ENCODE measurements at regions of chr14 and their contacts with region 1.

Region 1: GRCh38 chr14:69818757-69819191 is 21.7 kb upstream of the SLC10A1 start:
- DNase-seq: peak; percentile 95
- ATAC-seq: peak; percentile 92
- H3K4me3 ChIP-seq: no peak overlapping the region
- H3K27ac ChIP-seq: no peak overlapping the region
- H3K4me1 ChIP-seq: no peaks in the 10 kb centered on the region
- H3K27me3 ChIP-seq: peaks cover 83% of the 10 kb centered on the region
- CTCF ChIP-seq: peak; percentile 97

Region 2: GRCh38 chr14:69586404-69586803 is 232.4 kb before region 1 on chr14:
- CTCF ChIA-PET with region 1: no interaction called
- POLR2A ChIA-PET with region 1: no interaction called
- intact Hi-C with region 1: loop called (anchors 5 kb)
- DNase-seq: no peak
- ATAC-seq: no peak
- H3K4me3 ChIP-seq: no peak overlapping the region
- H3K27ac ChIP-seq: no peak overlapping the region
- H3K4me1 ChIP-seq: no peaks in the 10 kb centered on the region
- H3K27me3 ChIP-seq: no peaks in the 10 kb centered on the region
- CTCF ChIP-seq: no peak

Region 3: GRCh38 chr14:69803753-69804152 is 15.0 kb before region 1 on chr14:
- CTCF ChIA-PET with region 1: no interaction called
- POLR2A ChIA-PET with region 1: no interaction called
- intact Hi-C with region 1: no loop called
- DNase-seq: peak; percentile 48
- ATAC-seq: peak; percentile 91
- H3K4me3 ChIP-seq: no peak overlapping the region
- H3K27ac ChIP-seq: no peak overlapping the region
- H3K4me1 ChIP-seq: no peaks in the 10 kb centered on the region
- H3K27me3 ChIP-seq: peaks cover 26% of the 10 kb centered on the region
- CTCF ChIP-seq: peak; percentile 60

Region 4: DNA sequence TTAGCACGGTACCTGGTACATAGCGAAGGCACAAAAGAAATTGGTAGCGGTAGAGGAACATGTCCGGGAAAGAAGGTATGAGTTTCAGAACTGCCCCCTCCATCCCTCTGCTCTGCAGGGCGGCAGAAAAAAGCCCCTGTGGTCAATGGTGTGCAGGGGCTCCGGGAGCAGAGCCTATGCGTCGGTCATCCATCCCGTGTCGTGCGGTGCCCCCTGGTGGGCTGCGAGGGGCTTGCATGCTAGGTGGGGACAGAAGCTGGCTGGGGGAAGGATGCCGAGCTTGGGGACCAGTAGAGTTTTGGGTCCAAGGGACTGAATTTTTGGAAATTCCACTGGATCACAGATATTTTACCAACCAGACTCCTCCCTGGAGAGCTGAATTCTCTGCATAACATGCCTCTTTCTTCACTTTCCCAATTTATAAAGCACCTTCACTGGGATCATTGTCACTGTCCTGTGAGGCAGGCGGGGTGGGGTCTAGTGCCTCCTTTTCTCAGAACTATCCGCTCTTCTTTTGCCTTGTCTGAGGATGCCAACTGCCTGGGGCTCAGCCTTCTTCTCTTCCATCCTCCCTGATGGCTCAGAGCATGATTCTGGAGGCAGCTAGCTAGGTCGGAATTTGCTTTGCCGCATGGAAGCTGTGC is 209.1 kb after region 1 on chr14:
- CTCF ChIA-PET with region 1: interaction called, 32 read pairs
- POLR2A ChIA-PET with region 1: no interaction called
- intact Hi-C with region 1: loop called (anchors 1 kb)
- DNase-seq: peak; percentile 72
- ATAC-seq: peak; percentile 86
- H3K4me3 ChIP-seq: no peak overlapping the region
- H3K27ac ChIP-seq: no peak overlapping the region
- H3K4me1 ChIP-seq: peaks cover 4% of the 10 kb centered on the region; the same call in 1 of the 2 replicates
- H3K27me3 ChIP-seq: peaks cover 67% of the 10 kb centered on the region
- CTCF ChIP-seq: peak; percentile 93

Region 5: DNA sequence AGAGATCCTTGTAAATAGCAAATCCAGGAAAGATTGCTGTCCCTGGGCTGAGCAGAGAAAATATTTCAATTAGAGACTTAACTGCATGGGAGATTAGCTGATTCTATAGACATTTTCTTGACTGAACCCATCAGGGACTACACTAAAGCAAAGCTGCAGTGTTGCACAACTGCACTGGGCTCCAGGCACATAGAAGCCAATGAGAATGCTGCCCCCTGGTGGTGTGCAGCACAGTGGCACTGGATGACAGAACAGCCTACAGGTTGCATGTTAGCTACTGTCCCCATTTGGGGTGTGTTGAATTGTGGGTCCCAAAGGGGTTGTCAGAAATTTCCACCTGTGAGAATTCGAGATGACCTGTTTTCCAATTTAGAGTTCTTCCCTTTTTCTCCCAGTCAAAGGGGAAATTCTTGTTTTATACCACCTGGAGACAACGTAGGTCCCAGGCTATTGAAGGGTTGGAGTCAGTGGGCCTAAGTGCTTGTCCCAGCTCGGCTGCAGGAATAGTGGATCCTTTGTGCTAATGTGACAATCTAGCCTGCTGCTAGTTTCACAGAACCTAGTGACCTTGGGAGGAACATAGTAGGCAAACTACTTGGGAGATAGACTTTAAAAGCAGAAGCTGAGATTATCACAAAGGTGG is 255.3 kb after region 1 on chr14:
- CTCF ChIA-PET with region 1: interaction called, 8 read pairs
- POLR2A ChIA-PET with region 1: no interaction called
- intact Hi-C with region 1: loop called (anchors 1 kb)
- DNase-seq: peak; percentile 79
- ATAC-seq: peak; percentile 98
- H3K4me3 ChIP-seq: no peak overlapping the region
- H3K27ac ChIP-seq: no peak overlapping the region
- H3K4me1 ChIP-seq: no peaks in the 10 kb centered on the region
- H3K27me3 ChIP-seq: peaks cover 68% of the 10 kb centered on the region
- CTCF ChIP-seq: peak; percentile 98

Region 6: GRCh38 chr14:70317969-70318634 is 499.3 kb after region 1 on chr14:
- CTCF ChIA-PET with region 1: no interaction called
- POLR2A ChIA-PET with region 1: no interaction called
- intact Hi-C with region 1: loop called (anchors 1 kb)
- DNase-seq: peak; percentile 73
- ATAC-seq: peak; percentile 90
- H3K4me3 ChIP-seq: no peak overlapping the region
- H3K27ac ChIP-seq: no peak overlapping the region
- H3K4me1 ChIP-seq: no peaks in the 10 kb centered on the region
- H3K27me3 ChIP-seq: peaks cover 13% of the 10 kb centered on the region; the same call in 1 of the 2 replicates
- CTCF ChIP-seq: peak; percentile 82

Measured in PC-3 (cell line).